ENCODE measurements at regions of chr14 and their contacts with region 1.

Region 1: DNA sequence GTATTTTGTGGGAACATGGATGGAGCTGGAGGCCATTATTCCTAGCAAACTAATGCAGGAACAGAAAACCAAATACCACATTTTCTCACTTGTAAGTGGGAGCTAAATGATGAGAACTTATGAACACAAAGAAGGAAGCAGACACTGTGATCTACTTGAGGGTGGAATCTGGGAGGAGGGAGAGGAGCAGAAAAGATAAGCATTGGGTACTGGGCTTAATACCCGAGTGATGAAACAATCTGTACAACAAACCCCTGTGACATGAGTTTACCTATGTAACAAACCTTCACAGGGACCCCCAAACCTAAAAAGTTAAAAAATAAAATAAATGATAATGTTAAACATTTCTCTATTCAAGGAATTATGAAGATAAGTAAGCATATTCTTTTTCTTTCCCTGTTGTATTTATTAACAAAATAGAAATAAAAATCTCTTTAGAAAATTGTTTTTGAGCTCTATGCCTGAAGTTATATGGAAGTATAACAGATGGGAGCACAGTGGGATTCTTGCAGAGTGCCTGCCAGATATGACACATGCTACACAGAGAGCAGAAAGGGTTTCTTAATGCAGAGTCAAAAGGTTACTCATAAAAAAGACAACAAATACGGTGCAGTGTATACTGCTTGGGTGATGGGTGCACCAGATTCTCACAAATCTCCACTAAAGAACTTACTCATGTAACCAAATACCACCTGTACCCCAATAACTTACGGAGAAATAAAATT is 52.0 kb upstream of the SYNE2 start:
- DNase-seq: no peak
- H3K4me3 Mint-ChIP-seq: no peak overlapping the region
- H3K27ac Mint-ChIP-seq: no peak overlapping the region
- H3K4me1 Mint-ChIP-seq: peaks cover 2% of the 10 kb centered on the region
- H3K27me3 Mint-ChIP-seq: peaks cover 15% of the 10 kb centered on the region

Region 2: DNA sequence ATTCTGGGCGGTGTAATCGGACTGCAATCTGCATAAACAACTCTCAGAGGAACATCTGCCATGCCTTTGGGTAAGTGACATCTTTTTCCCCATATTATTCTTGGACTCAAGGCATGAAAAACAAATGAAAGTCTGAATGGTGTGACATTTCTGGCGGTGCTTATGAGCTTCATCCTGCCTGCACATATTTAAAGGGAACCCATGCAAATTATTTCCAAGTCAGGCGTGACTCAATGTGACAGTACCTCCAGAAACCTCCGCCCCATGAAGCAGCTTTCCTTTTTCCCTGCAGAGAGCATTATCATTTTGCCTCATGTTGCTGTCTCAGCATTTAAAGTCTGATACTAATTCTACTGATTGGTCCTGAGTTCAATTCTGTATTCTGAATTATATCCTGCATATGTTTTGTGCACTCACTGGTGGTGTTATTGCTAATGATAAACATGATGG is 1453.2 kb before region 1 on chr14:
- intact Hi-C with region 1: no loop called
- DNase-seq: no peak
- H3K4me3 Mint-ChIP-seq: no peak overlapping the region
- H3K27ac Mint-ChIP-seq: no peak overlapping the region
- H3K4me1 Mint-ChIP-seq: no peaks in the 10 kb centered on the region
- H3K27me3 Mint-ChIP-seq: no peaks in the 10 kb centered on the region

Region 3: GRCh38 chr14:64303471-64303917 is 502.7 kb after region 1 on chr14:
- intact Hi-C with region 1: loop called (anchors 2 kb)
- DNase-seq: peak; percentile 60
- H3K4me3 Mint-ChIP-seq: no peak overlapping the region
- H3K27ac Mint-ChIP-seq: no peak overlapping the region
- H3K4me1 Mint-ChIP-seq: peaks cover 4% of the 10 kb centered on the region
- H3K27me3 Mint-ChIP-seq: peaks cover 12% of the 10 kb centered on the region